PC-9 (cell line): ENCODE measurements at regions of chr18 and their contacts with region 1.

Region 1: GRCh38 chr18:2547477-2548087 is 23.7 kb downstream of the METTL4 start:
- DNase-seq: no peak
- H3K4me3 ChIP-seq: no peak overlapping the region
- H3K27ac ChIP-seq: no peak overlapping the region
- H3K4me1 ChIP-seq: no peaks in the 10 kb centered on the region
- H3K27me3 ChIP-seq: no peaks in the 10 kb centered on the region
- CTCF ChIP-seq: peak; percentile 84

Region 2: GRCh38 chr18:623761-624620 is 1923.6 kb before region 1 on chr18:
- CTCF ChIA-PET with region 1: no interaction called
- POLR2A ChIA-PET with region 1: no interaction called
- intact Hi-C with region 1: loop called (anchors 5 kb)
- DNase-seq: peak; percentile 48 to 72
- H3K4me3 ChIP-seq: no peak overlapping the region
- H3K27ac ChIP-seq: no peak overlapping the region
- H3K4me1 ChIP-seq: no peaks in the 10 kb centered on the region
- H3K27me3 ChIP-seq: peaks cover 40% of the 10 kb centered on the region; the same call in 1 of the 2 replicates
- CTCF ChIP-seq: peak; percentile 72

Region 3: DNA sequence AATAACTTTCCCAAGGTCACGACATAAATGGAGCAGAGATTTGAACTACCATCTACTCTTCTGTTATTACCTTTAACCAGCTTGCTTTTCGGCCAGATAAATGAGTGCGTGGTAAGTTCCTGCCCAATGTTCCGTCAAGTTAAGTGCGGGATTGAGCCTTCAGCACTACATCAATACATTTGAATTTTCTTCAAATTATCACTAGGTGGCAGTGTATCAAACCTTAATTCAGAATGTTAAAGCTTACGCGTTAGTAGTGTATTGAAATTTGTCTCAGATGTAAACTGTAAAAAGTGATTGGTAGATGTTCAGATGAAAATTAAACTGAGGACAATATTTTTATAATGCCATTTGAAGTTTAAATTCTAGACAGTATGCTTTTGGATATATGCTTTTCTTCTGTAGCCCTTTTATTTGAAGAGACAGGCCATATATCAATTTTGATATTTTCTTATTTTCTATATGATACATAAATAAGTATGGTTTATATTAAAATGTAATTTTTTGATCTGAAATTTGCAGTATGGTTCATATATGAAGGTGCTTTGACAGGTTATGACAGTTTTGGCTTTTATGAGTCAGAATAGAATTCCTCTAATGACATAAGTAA is 961.6 kb before region 1 on chr18:
- CTCF ChIA-PET with region 1: interaction called, 4 read pairs
- POLR2A ChIA-PET with region 1: no interaction called
- intact Hi-C with region 1: loop called (anchors 2 kb)
- DNase-seq: peak in 1 of 2 experiments; percentile 41
- H3K4me3 ChIP-seq: no peak overlapping the region
- H3K27ac ChIP-seq: no peak overlapping the region
- H3K4me1 ChIP-seq: no peaks in the 10 kb centered on the region
- H3K27me3 ChIP-seq: no peaks in the 10 kb centered on the region
- CTCF ChIP-seq: peak; percentile 70

Region 4: DNA sequence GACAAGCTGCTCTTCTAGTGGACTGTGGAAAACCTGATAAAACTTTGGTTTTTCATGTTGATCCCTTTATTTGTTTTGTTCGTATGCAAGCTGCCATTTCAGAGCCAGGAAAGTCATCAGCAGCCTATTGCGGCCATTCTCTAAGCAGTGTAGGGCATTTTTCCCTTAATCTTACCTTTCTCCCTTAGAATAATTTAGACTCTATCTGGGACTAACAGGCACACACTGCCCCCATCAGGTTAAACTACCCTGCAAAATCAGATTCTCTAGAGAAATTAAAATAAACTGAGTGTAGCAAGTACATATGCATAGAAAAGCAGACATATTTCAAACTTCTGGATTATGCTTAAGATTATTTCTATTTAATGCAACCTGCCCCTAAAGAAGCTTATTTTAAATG is 323.7 kb before region 1 on chr18:
- CTCF ChIA-PET with region 1: no interaction called
- POLR2A ChIA-PET with region 1: no interaction called
- intact Hi-C with region 1: loop called (anchors 2 kb)
- DNase-seq: peak in 1 of 2 experiments; percentile 34
- H3K4me3 ChIP-seq: no peak overlapping the region
- H3K27ac ChIP-seq: peak overlapping the region; percentile 49; the same call in 1 of the 2 replicates
- H3K4me1 ChIP-seq: peaks cover 14% of the 10 kb centered on the region
- H3K27me3 ChIP-seq: no peaks in the 10 kb centered on the region
- CTCF ChIP-seq: peak; percentile 60

Region 5: DNA sequence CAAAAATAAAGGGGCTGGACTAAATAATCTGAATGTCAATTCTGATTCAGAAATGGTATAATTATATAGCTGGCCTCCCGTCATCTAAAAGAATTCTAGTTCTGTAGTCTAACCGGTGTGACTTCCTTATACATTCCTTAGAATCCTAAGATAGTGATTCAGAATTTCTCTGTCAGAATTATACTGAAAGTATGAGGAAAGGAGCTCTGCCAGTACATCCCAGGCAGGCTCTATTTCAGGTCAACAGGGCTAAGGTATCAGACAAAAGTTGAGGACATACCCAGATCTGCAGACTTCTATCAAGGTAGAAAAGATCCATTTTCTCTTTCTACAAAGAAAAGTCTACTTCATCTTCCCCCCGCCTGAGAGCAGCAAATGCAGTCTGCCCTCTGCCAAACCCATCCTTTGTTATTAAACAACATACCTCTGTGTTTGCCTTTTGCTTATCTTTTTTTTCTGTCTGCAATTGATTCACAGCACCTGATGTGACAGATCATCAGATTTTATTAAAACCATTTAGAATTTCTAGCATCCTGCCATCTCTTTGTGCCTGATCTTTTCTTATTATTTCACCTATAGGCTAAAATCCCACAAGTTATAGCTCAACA is 104.7 kb before region 1 on chr18:
- CTCF ChIA-PET with region 1: no interaction called
- POLR2A ChIA-PET with region 1: interaction called, 4 read pairs
- intact Hi-C with region 1: loop called (anchors 2 kb)
- DNase-seq: peak; percentile 55 to 93
- H3K4me3 ChIP-seq: no peak overlapping the region; the same call in 1 of the 2 replicates
- H3K27ac ChIP-seq: peak overlapping the region; percentile 63
- H3K4me1 ChIP-seq: peaks cover 28% of the 10 kb centered on the region
- H3K27me3 ChIP-seq: no peaks in the 10 kb centered on the region
- CTCF ChIP-seq: no peak